ENCODE measurements at regions of chr2 and their contacts with region 1.

Region 1: GRCh38 chr2:167292430-167293171 is 404.3 kb downstream of the XIRP2 start:
- DNase-seq: peak; percentile 93
- ATAC-seq: peak; percentile 98
- H3K4me3 ChIP-seq: peak within 1 kb of the TSS; percentile 68
- H3K27ac ChIP-seq: peak within 1 kb of the TSS; percentile 67
- H3K4me1 ChIP-seq: no peaks in the 10 kb centered on the region; the same call in 1 of the 2 replicates
- H3K27me3 ChIP-seq: no peaks in the 10 kb centered on the region
- CTCF ChIP-seq: peak; percentile 34
- POLR2A ChIP-seq: no peak
- RAD21 ChIP-seq: no peak; the same call in 1 of the 2 replicates

Region 2: DNA sequence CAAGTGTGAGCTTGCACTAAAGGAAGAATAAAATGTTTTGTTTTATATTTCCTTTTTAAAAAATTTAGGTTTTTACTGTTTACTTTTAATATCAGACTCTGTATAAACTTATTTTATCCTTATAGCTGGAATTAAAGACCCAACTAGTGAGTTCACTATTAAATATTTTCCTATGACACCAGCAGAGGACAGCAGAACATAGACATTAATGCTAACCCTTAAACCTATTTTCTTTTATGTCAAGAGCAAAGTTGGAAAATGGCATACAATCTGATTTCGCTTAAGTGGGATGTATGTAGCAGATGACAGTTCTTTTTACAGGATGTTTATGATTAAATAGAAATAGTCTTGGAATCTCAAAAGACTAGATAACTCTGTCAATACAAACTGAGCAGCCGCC is 592.5 kb before region 1 on chr2:
- CTCF ChIA-PET with region 1: no interaction called
- POLR2A ChIA-PET with region 1: no interaction called
- dilution Hi-C with region 1: no loop called
- in situ Hi-C with region 1: no loop called
- intact Hi-C with region 1: loop called (anchors 5 kb)
- DNase-seq: peak; percentile 52
- ATAC-seq: peak; percentile 62; the same call in 1 of the 2 replicates
- H3K4me3 ChIP-seq: no peak overlapping the region
- H3K27ac ChIP-seq: no peak overlapping the region
- H3K4me1 ChIP-seq: no peaks in the 10 kb centered on the region
- H3K27me3 ChIP-seq: no peaks in the 10 kb centered on the region
- CTCF ChIP-seq: peak; percentile 75
- POLR2A ChIP-seq: no peak
- RAD21 ChIP-seq: peak; percentile 82

Region 3: GRCh38 chr2:166870346-166870745 is 422.3 kb before region 1 on chr2:
- CTCF ChIA-PET with region 1: no interaction called
- POLR2A ChIA-PET with region 1: no interaction called
- dilution Hi-C with region 1: no loop called
- in situ Hi-C with region 1: no loop called
- intact Hi-C with region 1: loop called (anchors 10 kb)
- DNase-seq: no peak
- ATAC-seq: no peak
- H3K4me3 ChIP-seq: no peak overlapping the region
- H3K27ac ChIP-seq: no peak overlapping the region
- H3K4me1 ChIP-seq: peaks cover 2% of the 10 kb centered on the region; the same call in 1 of the 2 replicates
- H3K27me3 ChIP-seq: no peaks in the 10 kb centered on the region
- CTCF ChIP-seq: no peak
- POLR2A ChIP-seq: no peak
- RAD21 ChIP-seq: no peak

Region 4: DNA sequence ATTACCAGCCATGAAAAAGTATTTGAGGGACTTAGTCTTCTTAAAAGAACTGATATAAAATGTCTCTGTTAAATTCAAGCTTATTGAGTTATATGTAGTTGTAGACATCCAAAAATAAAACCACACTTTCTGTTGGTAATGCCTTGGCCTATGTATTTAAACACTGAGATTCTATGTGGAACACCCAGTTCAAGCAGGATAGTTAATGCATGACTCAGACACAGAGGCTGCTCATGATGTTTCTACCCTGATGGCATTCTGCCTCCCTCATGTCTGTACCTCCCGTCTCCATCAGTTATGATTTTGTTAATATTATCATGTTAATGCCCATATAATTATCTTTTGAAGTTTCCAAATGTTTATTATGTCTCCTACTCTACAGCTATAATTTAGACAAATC is 239.8 kb before region 1 on chr2:
- CTCF ChIA-PET with region 1: no interaction called
- POLR2A ChIA-PET with region 1: no interaction called
- dilution Hi-C with region 1: no loop called
- in situ Hi-C with region 1: no loop called
- intact Hi-C with region 1: loop called (anchors 10 kb)
- DNase-seq: peak; percentile 84
- ATAC-seq: peak; percentile 95
- H3K4me3 ChIP-seq: no peak overlapping the region
- H3K27ac ChIP-seq: no peak overlapping the region
- H3K4me1 ChIP-seq: peaks cover 2% of the 10 kb centered on the region; the same call in 1 of the 2 replicates
- H3K27me3 ChIP-seq: no peaks in the 10 kb centered on the region
- CTCF ChIP-seq: no peak
- POLR2A ChIP-seq: no peak
- RAD21 ChIP-seq: no peak

Region 5: DNA sequence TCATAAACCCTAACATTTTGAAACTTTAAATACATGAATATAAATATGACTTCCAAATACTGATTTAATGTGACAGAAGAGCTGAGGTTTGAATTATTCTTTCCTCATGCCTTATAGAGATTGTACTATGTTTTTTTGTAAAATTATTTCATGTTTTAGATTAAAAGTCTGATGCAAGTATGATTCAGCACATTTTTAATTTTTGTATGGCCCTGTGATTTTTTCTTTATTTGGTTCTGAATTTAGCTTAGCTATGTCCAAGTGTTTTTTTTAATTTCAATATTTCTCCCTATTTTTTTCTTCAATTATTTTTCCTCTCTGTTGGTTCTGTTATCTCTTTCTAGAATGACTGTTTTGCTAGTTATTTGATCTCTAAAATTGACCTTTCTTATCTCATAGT is 147.8 kb after region 1 on chr2:
- CTCF ChIA-PET with region 1: no interaction called
- POLR2A ChIA-PET with region 1: interaction called, 15 read pairs
- dilution Hi-C with region 1: no loop called
- in situ Hi-C with region 1: no loop called
- intact Hi-C with region 1: no loop called
- DNase-seq: no peak
- ATAC-seq: no peak
- H3K4me3 ChIP-seq: no peak overlapping the region
- H3K27ac ChIP-seq: no peak overlapping the region
- H3K4me1 ChIP-seq: no peaks in the 10 kb centered on the region
- H3K27me3 ChIP-seq: no peaks in the 10 kb centered on the region
- CTCF ChIP-seq: no peak
- POLR2A ChIP-seq: no peak
- RAD21 ChIP-seq: no peak

Region 6: DNA sequence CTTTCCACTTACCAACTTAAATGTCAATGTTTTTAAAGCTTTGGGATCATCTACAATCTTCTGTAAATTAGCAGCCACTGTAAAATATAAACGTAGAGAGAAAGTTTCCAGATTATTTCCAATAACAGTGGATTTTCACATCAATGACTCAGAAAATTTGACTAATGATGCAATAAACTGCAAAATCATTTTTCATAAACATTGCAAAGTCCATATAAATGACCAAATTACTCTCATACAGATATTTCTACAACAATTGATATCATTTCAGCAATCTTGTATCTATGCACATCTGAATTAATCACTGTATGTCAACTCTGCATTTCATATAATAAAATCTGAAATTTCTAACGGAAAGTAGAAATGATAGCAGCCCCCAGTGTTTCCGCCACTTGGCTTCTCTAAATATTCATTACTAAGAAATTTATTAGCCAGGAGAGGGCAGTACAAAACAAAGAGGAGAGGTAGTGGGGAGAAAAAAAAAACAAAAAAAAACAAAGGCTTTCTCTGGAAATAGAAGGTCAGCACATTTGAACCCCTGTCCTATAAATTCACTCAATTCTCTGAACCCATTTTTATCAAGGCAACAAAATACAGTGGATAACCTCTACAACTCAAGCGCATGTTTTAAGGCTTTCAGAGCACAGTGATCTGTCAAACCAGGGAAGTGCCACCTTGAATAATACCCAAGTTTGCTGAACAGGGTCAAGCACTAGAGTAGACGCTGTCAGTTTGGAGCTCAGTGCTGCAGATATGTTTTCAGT is 672.2 kb after region 1 on chr2:
- CTCF ChIA-PET with region 1: no interaction called
- POLR2A ChIA-PET with region 1: no interaction called
- dilution Hi-C with region 1: no loop called
- in situ Hi-C with region 1: no loop called
- intact Hi-C with region 1: loop called (anchors 10 kb)
- DNase-seq: peak; percentile 18
- ATAC-seq: no peak
- H3K4me3 ChIP-seq: no peak overlapping the region
- H3K27ac ChIP-seq: peak overlapping the region; percentile 17; the same call in 1 of the 2 replicates
- H3K4me1 ChIP-seq: peaks cover 16% of the 10 kb centered on the region
- H3K27me3 ChIP-seq: no peaks in the 10 kb centered on the region
- CTCF ChIP-seq: peak; percentile 56
- POLR2A ChIP-seq: no peak
- RAD21 ChIP-seq: peak; percentile 47